ENCODE measurements at regions of chr2 and their contacts with region 1.

Region 1: DNA sequence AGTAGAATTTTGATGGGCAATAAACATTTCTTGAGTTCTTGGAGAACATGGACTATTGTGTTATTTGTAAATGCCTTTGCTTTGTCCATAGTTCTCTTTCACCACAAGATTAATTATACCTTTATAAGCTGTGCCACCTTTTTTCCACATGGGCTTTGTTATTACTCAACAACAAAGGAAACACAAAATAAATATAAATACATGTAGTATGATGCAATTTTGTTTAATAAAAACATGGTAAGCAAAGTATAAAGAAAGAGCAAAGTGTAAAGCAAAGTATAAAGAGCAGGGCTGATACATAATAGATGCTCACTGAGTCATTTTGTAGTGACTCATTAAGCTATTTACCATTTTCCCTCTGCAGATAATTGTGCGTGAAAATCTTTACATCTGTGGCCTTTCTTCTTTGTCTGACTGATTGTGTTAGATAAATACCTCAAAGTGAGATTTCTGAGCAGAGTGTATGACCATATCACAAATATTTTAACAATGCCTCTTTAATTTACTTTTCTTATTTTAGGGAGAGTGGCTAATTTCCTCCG is 80.9 kb downstream of the CERS6 start:
- DNase-seq: no peak
- H3K4me3 ChIP-seq: no peak overlapping the region
- H3K27ac ChIP-seq: no peak overlapping the region
- H3K4me1 ChIP-seq: peaks cover 0 to 22% (median 2%) of the 10 kb centered on the region in 4 donors
- H3K27me3 ChIP-seq: no peaks in the 10 kb centered on the region
- CTCF ChIP-seq: no peak

Region 2: DNA sequence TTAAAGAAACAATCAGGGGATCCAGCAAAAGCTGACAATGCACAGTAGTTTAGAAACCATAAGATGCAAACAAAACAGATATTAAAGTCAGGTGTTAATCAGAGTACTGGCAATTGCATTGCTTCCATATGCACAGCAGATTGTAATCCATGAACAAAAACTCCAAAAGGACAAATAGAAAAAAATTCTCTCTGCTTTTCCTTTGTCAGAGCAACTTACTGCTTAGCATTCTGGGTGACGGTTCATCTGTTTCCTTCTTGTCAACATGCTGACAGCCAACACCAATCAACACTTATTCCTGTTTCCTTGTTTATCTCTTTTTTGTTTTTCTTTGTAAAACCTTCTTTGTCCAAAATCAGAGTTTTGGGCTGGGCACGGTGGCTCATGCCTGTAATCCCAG is 1175.6 kb before region 1 on chr2:
- intact Hi-C with region 1: loop called (anchors 5 kb)
- DNase-seq: no peak
- H3K4me3 ChIP-seq: no peak overlapping the region
- H3K27ac ChIP-seq: no peak overlapping the region
- H3K4me1 ChIP-seq: no peaks in the 10 kb centered on the region
- H3K27me3 ChIP-seq: no peaks in the 10 kb centered on the region
- CTCF ChIP-seq: no peak

Region 3: GRCh38 chr2:168300460-168300859 is 236.5 kb before region 1 on chr2:
- intact Hi-C with region 1: no loop called
- DNase-seq: no peak
- H3K4me3 ChIP-seq: no peak overlapping the region
- H3K27ac ChIP-seq: no peak overlapping the region
- H3K4me1 ChIP-seq: no peaks in the 10 kb centered on the region
- H3K27me3 ChIP-seq: no peaks in the 10 kb centered on the region
- CTCF ChIP-seq: no peak